ENCODE measurements at regions of chr20 and their contacts with region 1.

Region 1: DNA sequence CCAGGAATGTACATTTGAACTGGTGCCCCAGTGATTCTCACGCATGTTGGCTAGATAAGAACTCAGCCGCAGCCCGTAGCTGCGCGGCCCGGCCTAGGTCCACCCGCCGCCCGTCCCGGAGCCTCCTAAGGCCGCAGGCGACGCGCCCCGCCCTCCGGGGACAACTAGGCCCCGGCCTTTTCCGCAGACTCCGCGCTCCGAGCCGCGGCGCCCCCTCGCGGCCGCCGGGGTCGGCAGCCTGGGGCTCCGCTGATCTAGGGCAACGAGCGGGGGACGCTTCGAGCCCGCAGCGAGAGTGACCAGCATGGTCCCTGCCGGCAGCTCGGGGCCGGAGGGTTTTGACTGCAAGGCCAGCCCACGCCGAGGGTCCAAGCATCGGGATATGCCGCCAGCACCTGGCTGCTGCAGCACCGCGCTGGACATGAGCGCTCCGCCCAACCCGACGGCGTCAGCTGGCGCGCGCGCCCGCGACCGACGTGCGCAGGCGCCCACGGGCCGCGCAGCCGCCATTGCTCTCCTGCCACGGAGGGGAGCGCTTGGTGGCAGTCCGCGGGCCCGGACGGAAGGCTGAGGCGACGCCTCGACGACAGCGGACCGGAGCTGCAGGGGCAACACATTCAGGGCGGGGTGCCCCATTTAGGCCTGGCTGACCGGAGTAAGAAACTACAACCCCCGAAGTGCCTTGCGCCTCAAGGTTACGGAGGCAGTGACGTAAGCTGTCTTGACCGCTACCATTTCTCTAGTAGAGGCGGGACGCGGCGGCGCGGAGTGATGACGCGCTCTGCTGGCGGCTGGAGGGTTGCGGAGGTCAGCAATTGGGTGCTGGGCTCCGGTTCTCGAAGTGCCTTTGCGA is at the start of gene AP5S1:
- DNase-seq: peak; percentile 88 to 99
- ATAC-seq: peak; percentile 77 to 82
- H3K4me3 ChIP-seq: peak within 1 kb of the TSS; percentile 63
- H3K27ac ChIP-seq: peak within 1 kb of the TSS; percentile 91 to 92
- H3K4me1 ChIP-seq: peaks cover 28% of the 10 kb centered on the region
- CTCF ChIP-seq: peak; percentile 100
- EP300 ChIP-seq: no peak
- POLR2A ChIP-seq: peak; percentile 88
- RAD21 ChIP-seq: peak; percentile 75 to 98
- polyA plus RNA-seq, gene AP5S1: 10.2 and 11.8 TPM in 2 replicates

Region 2: DNA sequence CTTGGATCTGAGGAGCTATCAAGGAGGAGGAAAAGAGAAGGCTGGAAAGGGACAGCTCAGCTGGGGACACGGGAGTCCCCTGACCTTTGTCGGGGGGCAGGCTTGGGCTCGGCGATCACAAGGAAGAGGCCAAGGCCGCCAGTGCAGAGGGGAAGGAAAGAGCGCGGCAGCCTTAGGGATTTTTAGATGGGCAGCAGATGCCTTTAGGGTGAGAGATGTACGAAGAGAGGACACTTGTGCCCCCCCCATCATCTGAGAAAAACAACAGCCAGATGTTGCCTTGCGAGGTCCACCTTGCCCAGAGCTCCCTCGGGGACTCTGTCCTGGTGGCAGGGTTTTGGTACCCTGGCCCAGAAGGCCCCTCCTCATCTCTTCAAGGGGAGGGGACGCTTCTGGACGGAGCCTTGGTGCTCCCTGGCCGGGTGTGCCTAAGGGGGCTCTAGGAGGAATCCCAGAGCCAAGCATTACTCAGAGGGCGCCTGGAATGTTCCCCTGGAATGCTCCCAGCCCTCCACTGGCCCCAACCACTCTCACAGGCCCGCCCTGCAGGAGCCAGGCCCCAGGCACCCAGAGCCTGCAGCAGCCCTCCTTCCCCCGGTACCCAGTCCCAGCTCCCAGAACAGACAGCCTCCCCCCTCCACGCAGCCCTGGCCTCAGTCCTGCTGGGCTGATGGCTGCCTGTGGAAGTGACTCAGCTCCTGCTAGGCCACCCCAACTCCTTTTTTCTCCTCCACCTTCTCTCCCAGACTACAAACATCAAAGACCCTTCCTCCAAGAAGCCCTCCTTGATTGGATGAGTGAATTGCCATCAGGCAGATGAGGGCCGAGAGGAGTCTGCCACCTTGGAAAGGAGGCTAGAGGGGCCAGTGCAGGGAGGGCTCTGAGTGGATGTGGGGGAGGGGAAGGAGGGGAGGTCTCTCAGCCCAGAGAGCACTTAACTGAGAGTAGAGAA is 140.2 kb before region 1 on chr20:
- CTCF ChIA-PET with region 1: interaction called, 11 read pairs
- POLR2A ChIA-PET with region 1: interaction called, 3 read pairs
- DNase-seq: no peak
- ATAC-seq: no peak
- H3K4me3 ChIP-seq: no peak overlapping the region
- H3K27ac ChIP-seq: peak overlapping the region in 1 of 2 experiments; percentile 31; a peak in 2 of 6 replicates
- H3K4me1 ChIP-seq: peaks cover 25% of the 10 kb centered on the region; the same call in 2 of the 3 replicates
- CTCF ChIP-seq: no peak
- EP300 ChIP-seq: no peak
- POLR2A ChIP-seq: no peak
- RAD21 ChIP-seq: no peak

Region 3: DNA sequence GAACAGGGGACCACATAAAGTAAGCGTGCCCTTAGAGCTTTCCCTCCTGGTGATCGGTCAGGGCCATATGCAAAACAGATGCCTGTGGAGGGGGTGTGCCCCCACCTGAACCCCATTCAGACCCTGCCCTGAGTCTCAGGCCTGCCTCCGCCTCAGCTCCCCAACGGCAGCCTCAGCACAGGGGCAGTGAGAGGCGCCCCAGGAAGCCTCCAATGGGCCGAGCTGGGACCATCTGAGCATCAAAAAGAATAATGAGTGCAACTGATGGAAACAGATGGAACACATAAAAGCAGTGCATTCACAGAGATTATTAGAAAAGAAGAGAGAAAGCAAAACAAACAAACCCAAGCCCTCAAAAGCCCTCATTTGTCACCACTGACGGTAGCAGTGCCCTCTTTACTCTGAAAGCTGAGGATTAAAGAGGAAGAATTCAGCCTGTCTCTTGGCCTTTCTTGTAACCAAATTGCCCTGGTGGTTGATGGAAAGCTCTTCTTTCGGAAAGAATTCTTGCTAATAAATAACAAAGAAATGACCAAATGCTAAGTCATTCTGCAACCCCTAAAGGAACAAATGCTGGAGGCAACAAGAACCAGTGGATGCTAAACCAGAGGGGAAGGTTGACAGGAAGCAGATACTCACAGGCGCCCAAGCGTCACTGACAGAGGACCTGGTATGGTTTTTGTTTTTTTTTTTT is 59.5 kb before region 1 on chr20:
- CTCF ChIA-PET with region 1: interaction called, 52 read pairs
- POLR2A ChIA-PET with region 1: no interaction called
- DNase-seq: no peak
- ATAC-seq: no peak
- H3K4me3 ChIP-seq: no peak overlapping the region
- H3K27ac ChIP-seq: no peak overlapping the region
- H3K4me1 ChIP-seq: peaks cover under 1% of the 10 kb centered on the region; the same call in 1 of the 3 replicates
- CTCF ChIP-seq: no peak
- EP300 ChIP-seq: no peak
- POLR2A ChIP-seq: no peak
- RAD21 ChIP-seq: no peak

Region 4: GRCh38 chr20:3781153-3781910 is 38.9 kb before region 1 on chr20 and contains the start of gene SPEF1:
- CTCF ChIA-PET with region 1: no interaction called
- POLR2A ChIA-PET with region 1: interaction called, 40 read pairs
- DNase-seq: peak; percentile 97 to 100
- ATAC-seq: peak; percentile 67 to 83
- H3K4me3 ChIP-seq: peak within 1 kb of the TSS; percentile 47
- H3K27ac ChIP-seq: peak within 1 kb of the TSS in 1 of 2 experiments; percentile 23; a peak in 1 of 6 replicates
- H3K4me1 ChIP-seq: peaks cover 28% of the 10 kb centered on the region
- CTCF ChIP-seq: peak; percentile 86
- EP300 ChIP-seq: no peak
- POLR2A ChIP-seq: no peak; the same call in 1 of the 2 replicates
- RAD21 ChIP-seq: peak; percentile 66 to 70
- polyA plus RNA-seq, gene SPEF1: 0.41 and 0.46 TPM in 2 replicates

Region 5: DNA sequence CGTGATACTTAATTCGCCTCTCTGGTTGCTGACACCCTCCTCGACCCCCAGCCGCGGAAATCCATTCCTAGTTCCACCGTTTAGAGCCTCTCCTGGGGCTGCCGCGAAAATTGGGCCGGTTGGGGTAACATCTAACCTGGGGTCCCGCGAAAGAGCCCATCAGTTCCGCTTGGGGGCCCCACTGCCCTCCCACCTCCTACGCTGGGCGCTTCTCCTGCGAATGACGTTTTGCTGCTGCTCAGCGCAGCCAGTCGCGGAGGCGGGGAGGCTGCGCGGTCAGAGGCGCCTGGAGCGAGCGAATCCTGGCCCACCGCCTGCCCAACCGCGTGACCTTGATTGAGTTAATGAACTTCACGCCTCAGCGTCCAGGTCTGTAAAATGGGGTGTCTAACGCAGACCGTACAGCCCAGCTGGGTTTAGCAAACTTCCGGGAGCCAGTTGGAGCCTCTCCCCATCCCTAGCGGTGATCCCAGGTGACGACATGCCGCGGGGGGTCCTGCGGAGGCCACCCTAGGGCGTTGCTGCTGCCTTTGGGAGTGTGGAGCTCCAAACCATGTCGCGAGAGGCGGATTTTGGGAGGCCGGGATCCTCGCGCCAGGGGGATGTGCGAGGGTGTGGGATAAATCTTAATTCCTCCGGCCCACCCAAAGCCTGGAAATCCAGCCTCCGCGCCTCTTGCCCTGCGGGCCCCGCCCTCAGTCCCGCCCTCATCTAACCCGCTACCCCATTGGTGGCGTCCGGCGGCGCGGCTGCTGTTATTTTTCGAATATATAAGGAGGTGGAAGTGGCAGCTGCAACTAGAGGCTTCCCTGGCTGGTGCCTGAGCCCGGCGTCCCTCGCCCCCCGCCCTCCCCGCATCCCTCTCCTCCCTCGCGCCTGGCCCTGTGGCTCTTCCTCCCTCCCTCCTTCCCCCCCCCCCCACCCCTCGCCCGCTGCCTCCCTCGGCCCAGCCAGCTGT is 24.5 kb before region 1 on chr20 and contains the start of gene CDC25B:
- CTCF ChIA-PET with region 1: no interaction called
- POLR2A ChIA-PET with region 1: interaction called, 19 read pairs
- DNase-seq: peak; percentile 96 to 97
- ATAC-seq: peak; percentile 88 to 91
- H3K4me3 ChIP-seq: peak within 1 kb of the TSS; percentile 84
- H3K27ac ChIP-seq: peak within 1 kb of the TSS; percentile 98 to 99
- H3K4me1 ChIP-seq: peaks cover 36% of the 10 kb centered on the region
- CTCF ChIP-seq: peak; percentile 37; the same call in 2 of the 3 replicates
- EP300 ChIP-seq: no peak
- POLR2A ChIP-seq: peak; percentile 89
- RAD21 ChIP-seq: peak; percentile 38 to 51; a peak in 4 of 5 replicates
- polyA plus RNA-seq, gene CDC25B: 133 and 136 TPM in 2 replicates

Region 6: GRCh38 chr20:3846740-3847428 is 26.6 kb after region 1 on chr20 and contains the start of gene MAVS:
- CTCF ChIA-PET with region 1: interaction called, 132 read pairs
- POLR2A ChIA-PET with region 1: interaction called, 5 read pairs
- DNase-seq: peak; percentile 87 to 91
- ATAC-seq: peak; percentile 96 to 98
- H3K4me3 ChIP-seq: peak within 1 kb of the TSS; percentile 70
- H3K27ac ChIP-seq: peak within 1 kb of the TSS; percentile 86 to 92
- H3K4me1 ChIP-seq: peaks cover 28% of the 10 kb centered on the region
- CTCF ChIP-seq: peak; percentile 17; the same call in 2 of the 3 replicates
- EP300 ChIP-seq: no peak
- POLR2A ChIP-seq: peak; percentile 78
- RAD21 ChIP-seq: no peak
- polyA plus RNA-seq, gene MAVS: 18.9 and 25.7 TPM in 2 replicates

Region 7: DNA sequence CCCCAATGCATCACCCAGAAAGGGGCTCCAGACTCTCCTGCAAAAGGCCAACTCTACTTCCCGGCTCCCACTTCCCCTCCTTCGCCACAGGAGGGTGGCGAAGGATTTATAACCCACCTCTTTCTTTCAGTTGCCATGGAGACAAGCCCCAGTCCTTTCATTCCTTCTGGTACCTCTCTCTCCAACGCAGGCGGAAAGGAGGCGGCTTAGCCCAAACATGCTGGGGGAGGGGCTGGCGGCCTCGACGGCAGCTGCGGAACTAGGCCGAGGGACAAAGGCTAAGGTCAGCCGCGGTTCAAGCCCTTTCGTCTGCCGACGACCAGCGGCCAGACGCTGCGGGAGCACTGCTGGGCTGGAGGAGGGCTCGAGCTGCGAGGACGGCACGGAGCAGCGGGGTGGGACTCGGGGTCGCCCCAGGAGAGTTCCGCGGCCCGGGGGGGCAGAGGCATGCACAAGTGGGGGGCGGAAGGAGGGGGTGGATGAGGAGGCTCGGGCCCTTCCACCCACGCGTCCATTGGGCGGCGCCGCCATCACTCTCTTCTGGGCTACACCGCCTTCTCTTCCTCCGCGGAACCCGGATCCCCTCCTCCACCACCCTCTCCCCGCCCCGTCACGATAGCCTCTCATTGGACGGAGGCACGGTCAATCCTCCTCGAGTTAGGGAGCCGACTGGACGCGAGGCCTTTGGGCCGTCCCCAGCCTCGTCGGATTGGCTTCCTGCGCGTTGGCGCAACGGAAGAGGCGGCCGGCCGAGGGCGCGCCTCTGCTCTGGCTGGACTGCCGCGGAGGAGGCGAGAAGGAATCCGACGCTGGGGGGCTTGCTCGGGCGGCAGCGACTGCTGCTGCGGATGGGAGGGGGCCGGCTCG is 68.6 kb after region 1 on chr20 and contains the start of gene PANK2:
- CTCF ChIA-PET with region 1: interaction called, 11 read pairs
- POLR2A ChIA-PET with region 1: no interaction called
- DNase-seq: peak; percentile 100
- ATAC-seq: peak; percentile 95 to 97
- H3K4me3 ChIP-seq: peak within 1 kb of the TSS; percentile 79
- H3K27ac ChIP-seq: peak within 1 kb of the TSS; percentile 96 to 97
- H3K4me1 ChIP-seq: peaks cover 41% of the 10 kb centered on the region
- CTCF ChIP-seq: peak; percentile 30; the same call in 1 of the 3 replicates
- EP300 ChIP-seq: 0 out of 5 replicates have a peak, but pooled peaks of 1 of the 2 experiments have one; percentile 19
- POLR2A ChIP-seq: peak; percentile 69
- RAD21 ChIP-seq: peak; percentile 58 to 62
- polyA plus RNA-seq, gene PANK2: 39.3 and 45.9 TPM in 2 replicates

Region 8: DNA sequence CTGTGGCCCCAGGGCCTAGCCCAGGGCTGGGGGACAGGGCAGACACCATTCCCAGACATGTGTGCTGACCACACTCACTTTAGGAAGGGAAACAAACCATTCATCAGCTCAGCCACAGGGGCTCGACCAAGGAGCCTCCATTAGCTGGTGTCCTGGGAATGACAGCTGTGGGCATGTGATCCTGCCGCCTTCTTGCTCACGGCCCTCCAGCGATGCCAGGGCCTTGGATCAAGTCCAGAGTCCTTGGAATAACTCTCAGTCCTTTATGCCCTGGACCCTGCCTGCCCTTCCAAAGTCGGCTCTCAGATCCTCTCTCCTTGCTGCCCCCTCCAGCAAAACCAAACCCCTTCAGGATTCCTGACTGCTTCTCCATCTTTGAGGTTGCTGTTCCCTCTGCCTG is 360.1 kb after region 1 on chr20:
- CTCF ChIA-PET with region 1: no interaction called
- POLR2A ChIA-PET with region 1: no interaction called
- DNase-seq: no peak
- ATAC-seq: no peak
- H3K4me3 ChIP-seq: no peak overlapping the region
- H3K27ac ChIP-seq: peak overlapping the region in 1 of 2 experiments; percentile 40; a peak in 3 of 6 replicates
- H3K4me1 ChIP-seq: no peaks in the 10 kb centered on the region; the same call in 2 of the 3 replicates
- CTCF ChIP-seq: no peak
- EP300 ChIP-seq: no peak
- POLR2A ChIP-seq: no peak
- RAD21 ChIP-seq: no peak